Posterior cingulate gyrus (tissue), 11 donors: ENCODE measurements at regions of chr19 and their contacts with region 1.

Region 1: DNA sequence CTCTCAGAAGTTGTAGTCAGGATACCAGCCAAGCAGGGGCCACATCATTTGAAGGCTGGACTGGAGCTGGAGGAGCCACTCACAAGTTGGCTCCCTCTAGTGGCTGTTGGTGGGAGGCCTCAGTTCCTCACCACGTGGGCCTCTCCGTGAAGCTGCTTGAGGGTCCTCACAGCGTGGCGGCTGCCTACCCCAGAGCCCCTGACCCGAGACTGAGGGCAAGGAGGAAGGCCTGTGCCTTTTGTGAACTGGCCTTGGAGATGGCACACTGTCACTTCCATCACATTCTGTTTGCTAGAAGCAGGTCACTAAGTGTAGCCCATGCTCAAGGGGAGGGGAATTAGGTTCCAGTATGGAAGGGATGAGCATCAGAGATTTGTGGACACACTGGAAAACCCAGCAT is 14.6 kb downstream of the GNA11 start:
- DNase-seq: peak in 5 of 10 donors; percentile 36 to 92 (median 49)

Region 2: DNA sequence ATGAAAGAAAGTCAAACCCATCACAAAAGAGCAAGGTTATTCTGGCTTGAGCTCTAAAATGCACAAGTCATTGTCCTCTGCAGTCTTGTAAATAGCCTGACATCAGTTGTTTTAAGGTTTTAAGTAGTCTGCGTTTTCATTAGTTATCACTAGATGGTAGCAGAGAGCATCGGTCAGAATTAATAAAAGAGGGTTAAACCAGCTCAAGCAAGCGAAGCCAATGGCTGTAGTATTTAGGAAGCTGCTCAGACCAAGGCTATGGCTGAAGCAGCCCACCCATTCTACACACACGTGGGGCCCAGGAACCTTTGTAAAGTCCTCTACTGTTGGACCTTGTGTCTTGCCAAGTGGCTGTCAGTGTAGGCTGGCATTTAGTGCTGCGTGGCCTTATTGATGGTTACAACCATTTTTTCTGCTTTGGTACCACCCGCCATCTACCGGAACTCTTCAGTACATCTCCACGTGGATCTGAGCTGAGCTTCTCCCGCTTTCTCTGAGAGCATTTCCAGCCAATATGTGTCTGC is 221.3 kb before region 1 on chr19:
- intact Hi-C with region 1: loop called (anchors 10 kb)
- DNase-seq: peak in 3 of 10 donors; percentile 23 to 53 (median 23)

Region 3: GRCh38 chr19:2950286-2951124 is 158.3 kb before region 1 on chr19:
- intact Hi-C with region 1: loop called (anchors 10 kb)
- DNase-seq: peak; percentile 99 to 100 (median 100)

Region 4: GRCh38 chr19:3125900-3126524 is 17.2 kb after region 1 on chr19:
- intact Hi-C with region 1: no loop called
- DNase-seq: peak in 4 of 10 donors; percentile 46 to 82 (median 63)

Region 5: GRCh38 chr19:3343619-3344502 is 235.1 kb after region 1 on chr19:
- intact Hi-C with region 1: no loop called
- DNase-seq: peak; percentile 55 to 97 (median 84)